Gastrocnemius medialis (tissue), 4 donors: ENCODE measurements at regions of chr2 and their contacts with region 1.

Region 1: GRCh38 chr2:152025678-152026287 is 73.1 kb downstream of the CACNB4 start:
- DNase-seq: peak; percentile 44 to 78
- ATAC-seq: peak; percentile 93
- H3K4me3 ChIP-seq: peak overlapping the region; percentile 38 to 49 (median 44)
- H3K27ac ChIP-seq: no peak overlapping the region
- H3K4me1 ChIP-seq: no peaks in the 10 kb centered on the region
- H3K27me3 ChIP-seq: no peaks in the 10 kb centered on the region
- CTCF ChIP-seq: peak; percentile 87 to 96 (median 91)
- POLR2A ChIP-seq: no peak

Region 2: DNA sequence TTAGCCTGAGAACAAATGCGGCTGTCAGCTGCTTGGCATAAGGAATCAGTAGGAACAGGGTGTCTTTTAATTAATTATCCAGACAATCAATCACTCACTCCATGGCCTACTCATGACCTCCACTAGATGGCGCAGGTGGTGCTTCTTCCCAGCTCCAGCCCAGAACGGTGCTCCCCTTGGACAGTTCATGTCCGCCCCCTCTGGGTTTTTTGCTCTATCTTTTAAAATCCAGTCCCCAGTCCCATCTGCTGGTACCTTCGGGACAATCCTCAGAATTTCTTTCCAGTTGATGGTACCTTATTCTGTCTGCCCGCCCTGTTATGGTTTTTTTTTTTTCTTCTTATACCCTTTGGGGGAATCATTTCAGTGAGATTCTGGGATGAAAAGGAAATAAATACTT is 26.7 kb before region 1 on chr2:
- in situ Hi-C with region 1: no loop called
- intact Hi-C with region 1: loop called (anchors 1 kb)
- DNase-seq: peak; percentile 14 to 33
- ATAC-seq: peak; percentile 51
- H3K4me3 ChIP-seq: no peak overlapping the region
- H3K27ac ChIP-seq: no peak overlapping the region
- H3K4me1 ChIP-seq: peaks cover 6 to 7% of the 10 kb centered on the region in 2 donors
- H3K27me3 ChIP-seq: no peaks in the 10 kb centered on the region
- CTCF ChIP-seq: peak; percentile 49 to 87 (median 69)
- POLR2A ChIP-seq: no peak

Region 3: DNA sequence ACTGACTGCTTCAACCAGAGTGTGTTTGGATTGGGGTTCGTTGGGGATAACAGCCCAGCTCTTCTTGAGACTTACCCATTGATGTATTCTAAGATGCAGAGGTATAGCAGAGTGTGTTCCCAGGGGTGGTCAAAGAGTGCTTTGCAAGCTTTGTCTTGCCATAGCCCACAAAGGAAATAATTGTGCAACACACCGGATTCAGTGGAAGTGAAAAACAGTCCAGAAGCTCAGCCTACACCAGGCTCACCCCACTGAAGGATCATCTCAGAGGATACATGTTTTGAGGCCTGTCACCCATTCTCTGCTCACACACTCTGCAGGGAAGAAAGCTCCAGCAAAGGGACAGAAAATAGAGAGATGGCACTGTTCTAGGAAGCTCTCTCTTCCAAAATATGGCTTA is 63.5 kb after region 1 on chr2:
- in situ Hi-C with region 1: no loop called
- intact Hi-C with region 1: no loop called
- DNase-seq: no peak
- ATAC-seq: no peak
- H3K4me3 ChIP-seq: no peak overlapping the region
- H3K27ac ChIP-seq: no peak overlapping the region
- H3K4me1 ChIP-seq: no peaks in the 10 kb centered on the region
- H3K27me3 ChIP-seq: no peaks in the 10 kb centered on the region
- CTCF ChIP-seq: no peak
- POLR2A ChIP-seq: no peak

Region 4: DNA sequence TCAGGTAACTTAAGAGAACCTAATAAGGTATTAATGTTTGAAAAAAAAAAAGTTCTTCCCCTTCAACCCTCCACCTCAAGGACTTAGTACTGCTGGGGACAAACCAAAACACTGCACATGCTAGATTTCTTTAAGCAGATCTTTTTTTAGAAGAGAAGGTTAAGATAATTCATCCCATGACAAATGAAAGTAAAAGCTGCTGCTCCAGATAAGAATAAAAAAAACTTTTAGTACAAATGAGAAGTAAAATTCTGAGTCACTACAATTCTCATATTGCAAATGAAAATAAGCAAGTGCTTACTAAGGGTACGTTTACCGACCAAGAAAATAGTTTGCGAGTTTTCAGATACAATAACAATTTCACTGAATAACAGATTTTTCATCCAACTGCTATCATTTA is 140.8 kb after region 1 on chr2:
- in situ Hi-C with region 1: loop called in 2 of 4 experiments (anchors 10 to 25 kb)
- intact Hi-C with region 1: no loop called
- DNase-seq: no peak
- ATAC-seq: no peak
- H3K4me3 ChIP-seq: no peak overlapping the region
- H3K27ac ChIP-seq: no peak overlapping the region
- H3K4me1 ChIP-seq: peaks cover 22 to 32% of the 10 kb centered on the region in 2 donors
- H3K27me3 ChIP-seq: no peaks in the 10 kb centered on the region
- CTCF ChIP-seq: no peak
- POLR2A ChIP-seq: no peak

Region 5: GRCh38 chr2:152635635-152636298 is 610.0 kb after region 1 on chr2:
- in situ Hi-C with region 1: loop called in 2 of 4 experiments (anchors 25 kb)
- intact Hi-C with region 1: no loop called
- DNase-seq: peak in 1 of 2 donors; percentile 30
- ATAC-seq: peak in 1 of 2 donors; percentile 53
- H3K4me3 ChIP-seq: no peak overlapping the region
- H3K27ac ChIP-seq: no peak overlapping the region
- H3K4me1 ChIP-seq: no peaks in the 10 kb centered on the region
- H3K27me3 ChIP-seq: no peaks in the 10 kb centered on the region
- CTCF ChIP-seq: peak; percentile 77 to 89 (median 87)
- POLR2A ChIP-seq: no peak

Region 6: DNA sequence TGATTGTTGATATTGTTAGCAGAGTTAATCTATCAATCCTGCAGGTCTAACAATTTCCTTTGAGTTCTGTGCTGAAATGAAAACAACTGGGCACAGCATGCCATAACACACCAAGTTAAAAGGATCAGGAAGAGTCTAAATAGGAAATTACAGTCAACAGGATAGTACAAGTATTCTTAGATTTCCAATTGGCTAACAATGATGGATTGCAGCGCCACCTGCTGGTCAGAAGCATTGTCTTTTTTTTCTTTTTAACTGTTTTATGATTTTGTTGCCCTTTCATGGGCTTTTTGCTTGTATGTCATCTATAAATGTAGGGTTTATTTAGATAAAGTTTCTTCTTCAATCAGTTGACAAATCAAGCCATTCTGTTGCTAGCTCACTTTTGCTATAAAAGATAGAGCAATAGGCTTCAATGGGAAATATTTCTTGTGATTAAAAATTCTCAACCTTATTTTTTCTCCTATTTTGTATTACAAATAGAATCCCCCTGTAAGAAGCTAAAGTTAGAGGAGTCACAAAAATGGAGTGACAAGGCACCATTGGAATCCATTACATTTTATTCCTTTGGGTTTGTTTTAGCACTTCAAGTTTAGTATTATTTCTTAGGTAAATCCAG is 1493.6 kb after region 1 on chr2:
- in situ Hi-C with region 1: loop called in 3 of 4 experiments (anchors 10 to 25 kb)
- intact Hi-C with region 1: no loop called
- DNase-seq: no peak
- ATAC-seq: no peak
- H3K4me3 ChIP-seq: no peak overlapping the region
- H3K27ac ChIP-seq: no peak overlapping the region
- H3K4me1 ChIP-seq: no peaks in the 10 kb centered on the region
- H3K27me3 ChIP-seq: no peaks in the 10 kb centered on the region
- CTCF ChIP-seq: peak in 4 of 5 experiments; percentile 55 to 76 (median 64)
- POLR2A ChIP-seq: no peak